CD8-positive, alpha-beta T cell (primary cell): ENCODE measurements at regions of chr11 and their contacts with region 1.

Region 1: DNA sequence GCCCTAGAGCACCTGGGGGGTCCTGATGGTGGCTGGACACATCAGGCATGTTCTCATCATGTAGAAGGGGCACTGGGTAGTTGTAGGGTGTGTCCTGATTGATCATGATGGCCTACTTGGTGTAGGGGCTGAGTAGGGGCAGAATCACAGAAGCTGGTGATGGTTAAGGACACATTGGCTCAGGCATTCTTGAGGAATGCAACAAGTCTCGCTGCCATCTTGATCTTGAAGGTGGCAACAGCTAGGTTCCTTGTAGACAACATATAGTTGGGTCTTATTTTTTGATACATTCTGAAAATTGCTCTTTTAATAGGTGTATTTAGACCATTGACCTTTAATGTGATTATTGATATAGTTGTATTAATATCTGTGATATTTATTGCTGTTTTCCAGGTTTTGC is 28.1 kb downstream of the PPP6R3 start:
- DNase-seq: no peak
- ATAC-seq: no peak
- H3K4me3 ChIP-seq: no peak overlapping the region
- H3K4me3 Mint-ChIP-seq: peak overlapping the region; percentile 21
- H3K27ac ChIP-seq: no peak overlapping the region
- H3K27ac Mint-ChIP-seq: no peak overlapping the region
- H3K4me1 ChIP-seq: peaks cover 63% of the 10 kb centered on the region
- H3K4me1 Mint-ChIP-seq: peaks cover 81% of the 10 kb centered on the region
- H3K27me3 ChIP-seq: no peaks in the 10 kb centered on the region
- H3K27me3 Mint-ChIP-seq: no peaks in the 10 kb centered on the region
- CTCF ChIP-seq: no peak

Region 2: DNA sequence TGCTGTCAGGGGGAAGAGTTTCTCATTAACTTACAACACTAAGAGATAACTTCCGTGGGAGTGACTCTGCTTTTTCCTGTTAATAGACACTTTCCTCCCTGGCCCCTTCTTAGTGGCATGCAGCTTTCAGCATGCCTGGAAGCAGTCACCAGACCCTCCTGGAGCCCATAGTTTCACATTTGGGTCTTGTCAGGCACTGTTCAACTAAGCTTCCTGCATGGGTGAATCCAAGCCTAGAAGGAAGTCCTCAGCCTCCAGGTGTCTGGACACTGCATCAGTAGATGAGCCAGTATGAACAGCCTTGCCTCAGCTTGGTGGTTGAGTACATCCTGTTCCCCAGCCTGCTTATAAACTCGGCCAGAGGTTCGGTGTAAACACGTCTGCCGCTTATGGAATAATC is 40.0 kb after region 1 on chr11:
- CTCF ChIA-PET with region 1: no interaction called
- POLR2A ChIA-PET with region 1: no interaction called
- intact Hi-C with region 1: loop called in 1 of 2 experiments (anchors 5 kb)
- DNase-seq: peak in 7 of 9 experiments; percentile 7 to 55 (median 22)
- ATAC-seq: peak; percentile 62
- H3K4me3 ChIP-seq: no peak overlapping the region
- H3K4me3 Mint-ChIP-seq: peak overlapping the region; percentile 20
- H3K27ac ChIP-seq: no peak overlapping the region
- H3K27ac Mint-ChIP-seq: peak overlapping the region; percentile 80
- H3K4me1 ChIP-seq: peaks cover 49% of the 10 kb centered on the region
- H3K4me1 Mint-ChIP-seq: peaks cover 92% of the 10 kb centered on the region
- H3K27me3 ChIP-seq: no peaks in the 10 kb centered on the region
- H3K27me3 Mint-ChIP-seq: no peaks in the 10 kb centered on the region
- CTCF ChIP-seq: no peak